Activated CD4-positive, alpha-beta T cell treated with anti-CD3 and anti-CD28 coated beads for 36 hours (primary cell): ENCODE measurements at regions of chr6 and their contacts with region 1.

Region 1: DNA sequence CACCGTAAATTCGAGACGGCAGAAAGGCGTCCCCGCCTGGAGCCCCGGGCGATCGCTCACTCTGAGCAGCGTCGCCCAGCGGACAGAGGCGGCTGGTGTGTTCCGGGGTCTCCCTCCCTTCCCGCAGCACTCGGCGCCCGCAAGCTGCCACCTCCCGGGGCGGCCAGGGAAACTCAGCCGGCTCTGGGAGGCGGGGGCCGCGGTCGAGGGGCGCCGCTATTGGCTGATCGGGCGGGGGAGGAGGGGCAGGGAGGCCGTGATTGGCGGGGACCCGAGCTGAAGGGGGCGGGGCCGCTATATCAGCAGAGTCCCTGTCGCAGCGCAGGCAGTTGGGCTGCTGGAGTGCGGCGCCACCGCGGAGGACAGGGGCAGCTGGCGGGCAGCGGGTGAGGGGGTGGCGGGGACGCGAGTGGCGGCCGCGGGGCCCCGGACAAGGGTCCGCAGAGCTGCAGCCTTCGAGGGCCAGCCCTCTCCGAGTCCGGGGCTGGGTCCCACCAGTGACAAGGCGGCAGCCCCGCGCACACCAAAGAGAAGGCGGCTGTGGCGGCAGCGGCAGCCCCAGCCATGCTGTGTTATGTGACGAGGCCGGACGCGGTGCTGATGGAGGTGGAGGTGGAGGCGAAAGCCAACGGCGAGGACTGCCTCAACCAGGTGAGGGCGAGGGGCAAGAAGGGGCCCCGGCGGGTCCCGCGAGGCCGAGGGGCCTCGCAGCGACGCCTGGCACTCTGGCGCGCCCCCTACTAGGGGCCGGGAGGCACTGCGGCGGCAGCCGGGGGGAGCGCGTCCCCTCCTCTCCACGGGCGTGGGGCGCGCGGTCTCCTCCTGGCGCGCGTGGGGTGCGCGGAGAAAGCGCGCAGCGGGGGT is at the start of gene MYLIP:
- DNase-seq: peak; percentile 98
- ATAC-seq: peak; percentile 82
- H3K4me3 Mint-ChIP-seq: peak within 1 kb of the TSS; percentile 90
- H3K27ac Mint-ChIP-seq: peak within 1 kb of the TSS; percentile 86
- H3K4me1 Mint-ChIP-seq: peaks cover 24% of the 10 kb centered on the region
- H3K27me3 Mint-ChIP-seq: no peaks in the 10 kb centered on the region
- total RNA-seq, gene MYLIP: 9.2 to 10.6 TPM

Region 2: DNA sequence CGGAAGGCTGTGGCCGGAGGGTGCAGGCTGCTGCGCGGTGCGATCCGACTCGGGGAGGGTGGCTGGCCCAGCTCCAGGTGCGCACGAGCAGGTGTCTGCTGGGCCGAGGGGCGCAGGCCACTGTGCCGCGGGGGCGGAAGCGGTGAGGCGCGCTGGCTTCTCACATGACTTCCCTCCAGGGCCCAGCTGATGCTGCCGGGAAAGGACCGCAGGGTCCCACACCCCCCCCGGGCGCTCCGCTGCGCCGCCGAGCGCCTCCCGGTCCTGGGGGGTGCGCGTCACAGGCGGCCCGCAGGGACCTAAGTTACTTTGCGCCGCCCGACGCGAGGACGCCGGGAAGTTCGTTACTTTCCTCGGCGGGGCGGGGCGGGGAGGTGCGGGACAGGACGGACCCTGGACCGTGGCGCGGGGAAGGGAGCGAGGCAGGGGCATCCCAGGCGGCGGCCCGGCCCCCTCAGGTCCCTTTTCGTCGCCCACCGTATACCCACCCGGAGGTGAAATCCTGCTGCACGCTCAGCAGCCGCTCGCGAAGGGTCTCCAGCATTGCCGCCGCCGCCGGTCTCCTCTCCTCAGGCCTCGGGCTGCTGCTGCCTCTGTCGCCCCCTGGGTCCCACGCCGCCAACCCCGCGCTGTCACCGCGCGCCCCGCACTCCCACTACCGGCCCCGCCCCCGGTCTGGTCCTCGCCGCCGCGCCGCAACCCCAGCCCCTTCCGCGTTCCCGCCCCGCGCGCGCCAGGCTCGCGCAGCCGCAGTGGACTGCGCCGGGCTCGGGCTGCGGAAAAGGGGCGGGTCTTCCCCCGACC is 466.5 kb before region 1 on chr6 and contains the start of gene DTNBP1:
- CTCF ChIA-PET with region 1: no interaction called
- POLR2A ChIA-PET with region 1: interaction called, 3 read pairs
- intact Hi-C with region 1: loop called in 1 of 2 experiments (anchors 2 kb)
- DNase-seq: peak; percentile 90
- ATAC-seq: peak; percentile 91
- H3K4me3 Mint-ChIP-seq: peak within 1 kb of the TSS; percentile 78
- H3K27ac Mint-ChIP-seq: peak within 1 kb of the TSS; percentile 74
- H3K4me1 Mint-ChIP-seq: peaks cover 33% of the 10 kb centered on the region
- H3K27me3 Mint-ChIP-seq: peaks cover 3% of the 10 kb centered on the region
- total RNA-seq, gene DTNBP1: 18.4 to 23.4 TPM

Region 3: GRCh38 chr6:15879382-15880261 is 249.4 kb before region 1 on chr6:
- CTCF ChIA-PET with region 1: no interaction called
- POLR2A ChIA-PET with region 1: no interaction called
- intact Hi-C with region 1: loop called in 1 of 2 experiments (anchors 5 kb)
- DNase-seq: peak; percentile 87
- ATAC-seq: peak; percentile 71
- H3K4me3 Mint-ChIP-seq: peak overlapping the region; percentile 18
- H3K27ac Mint-ChIP-seq: peak overlapping the region; percentile 52
- H3K4me1 Mint-ChIP-seq: peaks cover 42% of the 10 kb centered on the region
- H3K27me3 Mint-ChIP-seq: no peaks in the 10 kb centered on the region

Region 4: GRCh38 chr6:16153211-16153820 is 24.3 kb after region 1 on chr6:
- CTCF ChIA-PET with region 1: no interaction called
- POLR2A ChIA-PET with region 1: no interaction called
- intact Hi-C with region 1: no loop called
- DNase-seq: no peak
- ATAC-seq: no peak
- H3K4me3 Mint-ChIP-seq: no peak overlapping the region
- H3K27ac Mint-ChIP-seq: no peak overlapping the region
- H3K4me1 Mint-ChIP-seq: no peaks in the 10 kb centered on the region
- H3K27me3 Mint-ChIP-seq: no peaks in the 10 kb centered on the region

Region 5: GRCh38 chr6:16206595-16207037 is 77.6 kb after region 1 on chr6:
- CTCF ChIA-PET with region 1: interaction called, 3 read pairs
- POLR2A ChIA-PET with region 1: no interaction called
- intact Hi-C with region 1: loop called in 1 of 2 experiments (anchors 2 kb)
- DNase-seq: peak; percentile 55
- ATAC-seq: peak; percentile 69
- H3K4me3 Mint-ChIP-seq: no peak overlapping the region
- H3K27ac Mint-ChIP-seq: no peak overlapping the region
- H3K4me1 Mint-ChIP-seq: peaks cover 2% of the 10 kb centered on the region
- H3K27me3 Mint-ChIP-seq: peaks cover 9% of the 10 kb centered on the region

Region 6: GRCh38 chr6:16690608-16691198 is 561.7 kb after region 1 on chr6:
- CTCF ChIA-PET with region 1: no interaction called
- POLR2A ChIA-PET with region 1: no interaction called
- intact Hi-C with region 1: loop called in 1 of 2 experiments (anchors 10 kb)
- DNase-seq: peak; percentile 73
- ATAC-seq: peak; percentile 75
- H3K4me3 Mint-ChIP-seq: peak overlapping the region; percentile 34
- H3K27ac Mint-ChIP-seq: peak overlapping the region; percentile 88
- H3K4me1 Mint-ChIP-seq: peaks cover 88% of the 10 kb centered on the region
- H3K27me3 Mint-ChIP-seq: no peaks in the 10 kb centered on the region